ENCODE measurements at regions of chr19 and their contacts with region 1.

Region 1: GRCh38 chr19:38004521-38005223 is 97.7 kb downstream of the SIPA1L3 start:
- DNase-seq: peak; percentile 95
- ATAC-seq: peak; percentile 87
- H3K4me3 ChIP-seq: peak overlapping the region; percentile 63
- H3K27ac ChIP-seq: peak overlapping the region; percentile 89
- H3K4me1 ChIP-seq: peaks cover 57% of the 10 kb centered on the region
- H3K27me3 ChIP-seq: no peaks in the 10 kb centered on the region
- CTCF ChIP-seq: no peak
- EP300 ChIP-seq: no peak
- POLR2A ChIP-seq: peak; percentile 80
- RAD21 ChIP-seq: no peak

Region 2: DNA sequence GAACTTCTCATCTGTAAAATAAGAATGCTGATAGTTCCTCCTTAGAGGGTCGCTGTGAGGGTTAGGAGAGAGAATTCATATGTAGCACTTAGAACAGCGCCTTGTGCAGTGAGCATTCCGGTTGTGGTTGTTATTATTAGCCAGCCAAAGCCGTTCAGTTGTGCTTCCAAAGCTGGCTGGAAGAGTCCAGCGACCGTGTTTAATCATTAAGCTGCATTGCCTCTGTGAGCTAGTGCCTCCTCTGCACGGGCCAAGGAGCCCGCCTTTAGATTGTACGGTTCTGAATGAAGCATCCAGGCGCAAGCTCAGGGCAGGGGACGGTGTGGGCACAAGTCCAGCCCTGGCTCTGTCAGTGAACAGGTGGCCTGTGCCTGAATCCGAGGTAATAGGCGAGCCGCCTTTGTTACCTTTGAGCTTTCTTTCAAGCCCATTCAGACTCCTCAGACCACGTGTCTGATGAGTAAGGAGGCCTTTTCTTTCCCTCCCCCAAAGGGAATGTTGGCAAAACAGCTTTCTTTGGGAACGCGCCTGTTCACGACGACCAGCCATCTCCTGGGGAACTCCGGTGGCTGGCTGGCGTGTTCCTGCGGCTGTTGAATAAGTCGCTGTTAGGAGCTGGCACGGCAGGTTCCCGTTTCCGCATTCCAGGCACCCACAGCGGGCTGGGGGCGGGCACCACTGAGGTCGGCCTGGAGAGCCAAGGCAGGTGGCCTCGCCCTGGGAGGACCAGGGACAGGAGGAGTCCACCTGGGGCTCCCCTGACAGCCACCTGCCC is 72.6 kb before region 1 on chr19:
- CTCF ChIA-PET with region 1: interaction called, 8 read pairs
- POLR2A ChIA-PET with region 1: interaction called, 16 read pairs
- RAD21 ChIA-PET with region 1: interaction called, 26 read pairs
- SMC1A ChIA-PET with region 1: interaction called, 27 read pairs
- in situ Hi-C with region 1: no loop called
- intact Hi-C with region 1: no loop called
- DNase-seq: no peak
- ATAC-seq: peak; percentile 70
- H3K4me3 ChIP-seq: peak overlapping the region; percentile 69
- H3K27ac ChIP-seq: peak overlapping the region; percentile 87
- H3K4me1 ChIP-seq: peaks cover 46% of the 10 kb centered on the region
- H3K27me3 ChIP-seq: no peaks in the 10 kb centered on the region
- CTCF ChIP-seq: 0 out of 6 replicates have a peak, but pooled peaks of 1 of the 3 experiments have one; percentile 10
- EP300 ChIP-seq: no peak
- POLR2A ChIP-seq: peak; percentile 55
- RAD21 ChIP-seq: no peak

Region 3: DNA sequence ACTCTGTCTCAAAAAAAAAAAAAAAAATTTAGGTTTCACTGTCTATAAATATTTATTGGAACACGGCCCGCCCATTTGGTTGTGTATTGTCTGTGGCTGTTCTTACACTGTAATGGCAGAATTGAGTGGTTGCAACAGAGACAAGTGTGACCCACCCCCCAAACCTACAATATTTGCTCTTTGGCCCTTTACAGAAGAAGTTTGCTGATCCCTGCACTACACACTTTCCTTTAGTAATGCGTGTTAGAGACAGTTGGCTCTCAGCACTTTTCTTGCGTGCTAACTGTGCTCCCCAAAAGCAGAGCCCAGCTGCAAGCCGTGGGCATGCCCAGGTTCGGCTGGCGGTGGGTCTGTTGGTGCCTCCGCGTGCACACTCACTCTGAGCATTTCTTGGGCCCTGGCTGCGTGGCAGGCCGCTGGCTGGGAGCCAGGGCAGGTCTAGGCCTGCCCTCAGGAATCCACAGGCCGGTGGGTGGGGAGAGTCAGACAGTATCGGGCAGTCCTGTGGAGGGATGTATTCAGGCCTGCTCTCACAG is 25.1 kb before region 1 on chr19:
- CTCF ChIA-PET with region 1: interaction called, 4 read pairs
- POLR2A ChIA-PET with region 1: interaction called, 23 read pairs
- RAD21 ChIA-PET with region 1: interaction called, 59 read pairs
- SMC1A ChIA-PET with region 1: interaction called, 47 read pairs
- in situ Hi-C with region 1: no loop called
- intact Hi-C with region 1: loop called (anchors 1 kb)
- DNase-seq: peak; percentile 69
- ATAC-seq: peak; percentile 46
- H3K4me3 ChIP-seq: peak overlapping the region; percentile 38; the same call in 1 of the 2 replicates
- H3K27ac ChIP-seq: peak overlapping the region; percentile 95
- H3K4me1 ChIP-seq: peaks cover 58% of the 10 kb centered on the region
- H3K27me3 ChIP-seq: no peaks in the 10 kb centered on the region
- CTCF ChIP-seq: no peak
- EP300 ChIP-seq: no peak
- POLR2A ChIP-seq: peak; percentile 57; the same call in 1 of the 2 replicates
- RAD21 ChIP-seq: no peak

Region 4: DNA sequence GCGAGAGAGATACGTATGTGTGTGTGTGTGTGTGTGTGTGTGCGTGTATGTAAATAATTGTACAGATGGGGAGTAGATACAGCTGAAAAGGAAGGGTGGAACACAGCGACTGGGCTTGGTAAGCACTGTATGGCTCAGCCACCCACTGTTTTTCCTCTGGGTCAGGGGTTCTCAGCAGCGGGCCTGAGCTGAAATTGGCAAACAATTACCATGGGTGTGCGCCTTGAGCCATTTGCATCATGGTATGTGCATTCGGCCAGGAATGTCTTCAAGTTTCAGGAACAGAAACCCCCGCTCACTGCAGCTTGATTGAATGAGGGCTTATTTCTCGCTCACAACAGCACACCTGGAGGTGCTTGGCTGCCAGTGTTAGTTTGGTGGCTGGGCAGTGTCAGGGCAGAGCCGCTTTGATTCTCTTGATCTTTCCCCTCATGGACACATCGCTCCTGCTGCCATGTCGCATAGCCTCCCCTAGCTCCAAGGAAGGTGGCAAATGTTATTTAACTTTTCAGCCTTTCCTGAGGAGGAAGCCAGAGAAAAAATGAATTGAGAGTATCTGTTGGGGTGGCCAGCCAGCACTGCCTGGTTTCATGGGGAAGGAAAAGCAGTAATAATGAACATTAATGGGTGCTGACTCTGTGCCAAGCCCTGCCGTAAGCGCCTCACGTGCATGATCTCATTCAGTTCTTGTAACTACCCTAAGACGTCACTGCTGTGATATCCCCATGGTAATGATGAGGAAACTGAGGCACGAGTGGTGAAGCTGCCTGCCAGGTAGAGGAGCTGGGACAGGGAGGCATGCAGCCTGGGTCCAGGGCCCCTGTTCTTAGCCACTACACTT is 29.2 kb after region 1 on chr19:
- CTCF ChIA-PET with region 1: interaction called, 5 read pairs
- POLR2A ChIA-PET with region 1: interaction called, 17 read pairs
- RAD21 ChIA-PET with region 1: interaction called, 6 read pairs
- SMC1A ChIA-PET with region 1: interaction called, 15 read pairs
- in situ Hi-C with region 1: no loop called
- intact Hi-C with region 1: no loop called
- DNase-seq: peak; percentile 81
- ATAC-seq: peak; percentile 94
- H3K4me3 ChIP-seq: peak overlapping the region; percentile 11
- H3K27ac ChIP-seq: peak overlapping the region; percentile 69
- H3K4me1 ChIP-seq: peaks cover 39% of the 10 kb centered on the region
- H3K27me3 ChIP-seq: no peaks in the 10 kb centered on the region
- CTCF ChIP-seq: peak; percentile 21 to 51 (median 44); a peak in 4 of 6 replicates
- EP300 ChIP-seq: peak; percentile 40 to 59; a peak in 2 of 4 replicates
- POLR2A ChIP-seq: no peak
- RAD21 ChIP-seq: peak; percentile 35; the same call in 1 of the 2 replicates

Region 5: GRCh38 chr19:38061294-38061693 is 56.6 kb after region 1 on chr19:
- CTCF ChIA-PET with region 1: interaction called, 3 read pairs
- POLR2A ChIA-PET with region 1: interaction called, 4 read pairs
- RAD21 ChIA-PET with region 1: interaction called, 4 read pairs
- SMC1A ChIA-PET with region 1: interaction called, 11 read pairs
- in situ Hi-C with region 1: no loop called
- intact Hi-C with region 1: no loop called
- DNase-seq: no peak
- ATAC-seq: no peak
- H3K4me3 ChIP-seq: no peak overlapping the region
- H3K27ac ChIP-seq: no peak overlapping the region
- H3K4me1 ChIP-seq: peaks cover 29% of the 10 kb centered on the region
- H3K27me3 ChIP-seq: no peaks in the 10 kb centered on the region
- CTCF ChIP-seq: no peak
- EP300 ChIP-seq: no peak
- POLR2A ChIP-seq: no peak
- RAD21 ChIP-seq: no peak